Panc1 (cell line): ENCODE measurements at regions of chr15 and their contacts with region 1.

Region 1: GRCh38 chr15:69443032-69443611 is 9.5 kb upstream of the RPLP1 start:
- DNase-seq: no peak
- ATAC-seq: no peak
- H3K4me3 ChIP-seq: no peak overlapping the region
- H3K27ac ChIP-seq: no peak overlapping the region
- H3K4me1 ChIP-seq: no peaks in the 10 kb centered on the region
- H3K27me3 ChIP-seq: no peaks in the 10 kb centered on the region
- CTCF ChIP-seq: no peak

Region 2: GRCh38 chr15:69172828-69173227 is 270.3 kb before region 1 on chr15:
- CTCF ChIA-PET with region 1: no interaction called
- POLR2A ChIA-PET with region 1: no interaction called
- in situ Hi-C with region 1: no loop called
- intact Hi-C with region 1: no loop called
- DNase-seq: no peak
- ATAC-seq: no peak
- H3K4me3 ChIP-seq: no peak overlapping the region
- H3K27ac ChIP-seq: no peak overlapping the region
- H3K4me1 ChIP-seq: no peaks in the 10 kb centered on the region
- H3K27me3 ChIP-seq: no peaks in the 10 kb centered on the region
- CTCF ChIP-seq: no peak

Region 3: GRCh38 chr15:69290346-69291164 is 152.6 kb before region 1 on chr15:
- CTCF ChIA-PET with region 1: no interaction called
- POLR2A ChIA-PET with region 1: no interaction called
- in situ Hi-C with region 1: no loop called
- intact Hi-C with region 1: no loop called
- DNase-seq: no peak
- ATAC-seq: no peak
- H3K4me3 ChIP-seq: no peak overlapping the region
- H3K27ac ChIP-seq: no peak overlapping the region
- H3K4me1 ChIP-seq: no peaks in the 10 kb centered on the region
- H3K27me3 ChIP-seq: no peaks in the 10 kb centered on the region
- CTCF ChIP-seq: no peak

Region 4: DNA sequence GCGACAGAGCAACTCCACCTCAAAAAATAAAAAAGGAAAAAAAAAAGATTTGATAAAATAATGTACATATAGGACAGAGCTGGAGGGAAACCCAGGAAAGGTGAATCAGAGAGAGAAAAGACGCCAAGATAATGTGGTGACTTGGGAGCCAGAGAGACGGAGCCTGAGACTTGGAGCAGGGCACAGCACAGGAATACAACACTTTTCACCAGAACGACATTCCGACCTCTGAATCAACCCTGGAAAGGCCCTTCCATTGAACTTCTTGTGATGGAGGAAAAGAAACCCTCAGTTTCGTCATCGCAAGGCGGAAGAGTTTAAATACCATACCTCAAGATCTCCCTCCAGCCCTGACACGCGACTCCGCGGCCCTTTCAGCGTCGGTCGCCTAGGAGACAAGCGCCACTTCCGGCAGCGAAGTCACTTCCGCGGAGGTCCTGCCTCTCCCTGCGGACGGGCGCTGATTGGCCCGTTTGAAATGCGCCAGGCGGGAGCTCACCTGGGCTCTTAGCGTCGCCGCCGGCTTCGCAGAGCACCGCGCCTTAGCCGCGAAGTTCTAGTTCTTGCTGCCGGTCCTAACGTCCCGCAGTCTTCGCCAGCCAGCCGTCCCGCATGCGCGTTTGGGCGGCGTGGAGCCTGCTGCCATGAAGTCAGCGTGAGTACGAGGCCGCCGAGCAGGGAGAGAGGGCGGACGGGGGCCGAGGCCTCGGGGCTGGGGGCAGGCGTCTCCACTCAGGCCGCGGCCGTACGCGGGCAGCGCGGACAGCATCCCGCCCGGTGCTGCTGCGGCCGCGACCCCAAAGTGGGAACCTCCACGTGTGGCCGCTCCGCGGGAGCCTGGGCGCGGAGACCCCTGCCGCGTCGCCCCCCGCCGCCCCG is 29.1 kb before region 1 on chr15 and contains the start of gene KIF23:
- CTCF ChIA-PET with region 1: no interaction called
- POLR2A ChIA-PET with region 1: interaction called, 11 read pairs
- in situ Hi-C with region 1: no loop called
- intact Hi-C with region 1: no loop called
- DNase-seq: peak; percentile 75
- ATAC-seq: peak; percentile 98
- H3K4me3 ChIP-seq: peak within 1 kb of the TSS; percentile 65 to 84
- H3K27ac ChIP-seq: peak within 1 kb of the TSS; percentile 96
- H3K4me1 ChIP-seq: peaks cover 22% of the 10 kb centered on the region; the same call in 1 of the 2 replicates
- H3K27me3 ChIP-seq: no peaks in the 10 kb centered on the region
- CTCF ChIP-seq: no peak
- total RNA-seq, gene KIF23: 82.5 TPM

Region 5: GRCh38 chr15:69623392-69624152 is 180.4 kb after region 1 on chr15:
- CTCF ChIA-PET with region 1: no interaction called
- POLR2A ChIA-PET with region 1: no interaction called
- in situ Hi-C with region 1: no loop called
- intact Hi-C with region 1: no loop called
- DNase-seq: no peak
- ATAC-seq: no peak
- H3K4me3 ChIP-seq: no peak overlapping the region
- H3K27ac ChIP-seq: no peak overlapping the region
- H3K4me1 ChIP-seq: no peaks in the 10 kb centered on the region
- H3K27me3 ChIP-seq: no peaks in the 10 kb centered on the region; the same call in 1 of the 2 replicates
- CTCF ChIP-seq: no peak

Region 6: DNA sequence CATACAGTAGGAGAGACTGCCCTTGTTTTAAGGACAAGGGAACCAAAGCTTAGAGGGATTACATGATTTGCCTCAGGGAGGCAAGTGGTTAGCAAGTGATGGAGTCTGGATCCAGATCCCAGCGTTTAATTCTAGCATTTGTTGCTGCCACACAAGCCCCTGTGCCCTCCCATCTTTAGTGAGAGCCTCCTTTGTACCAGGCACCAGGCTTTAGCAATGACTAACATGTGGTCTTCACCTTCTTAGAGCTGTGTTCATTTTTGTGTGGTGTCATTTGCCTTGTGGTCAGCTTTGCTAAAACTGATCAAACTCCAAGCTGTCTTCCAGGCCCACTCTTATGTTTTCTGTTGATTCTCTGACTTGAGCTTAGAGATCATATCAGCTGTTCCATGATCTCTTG is 300.0 kb after region 1 on chr15:
- CTCF ChIA-PET with region 1: interaction called, 11 read pairs
- POLR2A ChIA-PET with region 1: no interaction called
- in situ Hi-C with region 1: no loop called
- intact Hi-C with region 1: no loop called
- DNase-seq: no peak
- ATAC-seq: no peak
- H3K4me3 ChIP-seq: no peak overlapping the region
- H3K27ac ChIP-seq: no peak overlapping the region
- H3K4me1 ChIP-seq: no peaks in the 10 kb centered on the region
- H3K27me3 ChIP-seq: no peaks in the 10 kb centered on the region
- CTCF ChIP-seq: no peak

Region 7: DNA sequence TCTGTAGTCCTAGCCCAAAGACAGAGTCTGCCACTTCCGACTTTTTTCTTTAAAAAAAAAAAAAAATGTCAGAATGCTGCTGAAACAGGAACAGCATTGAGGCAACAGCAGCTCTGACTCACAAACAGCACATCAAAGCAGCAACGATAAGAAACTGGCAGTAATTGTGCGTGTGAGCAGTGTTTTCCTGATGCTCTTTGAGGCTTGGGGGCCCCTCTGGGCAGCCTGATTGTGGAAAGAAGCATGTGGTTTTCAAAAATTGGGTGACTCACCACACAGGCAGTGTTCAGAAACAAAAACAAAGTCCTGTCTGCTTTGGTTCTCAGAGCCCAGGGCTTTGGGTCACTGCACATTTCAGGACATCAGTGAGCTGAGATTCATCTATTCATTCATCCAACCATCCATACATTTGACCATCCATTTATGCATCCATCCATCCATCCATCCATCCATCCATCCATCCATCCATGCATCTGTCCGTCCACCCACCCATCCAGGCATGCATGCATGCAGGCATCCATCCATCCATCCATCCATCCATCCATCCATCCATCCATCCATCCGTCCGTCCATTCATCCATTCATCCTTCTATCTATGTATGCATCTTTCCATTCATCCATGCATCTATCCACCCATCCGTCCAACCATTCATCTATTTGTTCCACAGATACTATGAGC is 317.9 kb after region 1 on chr15:
- CTCF ChIA-PET with region 1: no interaction called
- POLR2A ChIA-PET with region 1: no interaction called
- in situ Hi-C with region 1: no loop called
- intact Hi-C with region 1: no loop called
- DNase-seq: peak; percentile 17
- ATAC-seq: peak; percentile 93
- H3K4me3 ChIP-seq: no peak overlapping the region
- H3K27ac ChIP-seq: no peak overlapping the region
- H3K4me1 ChIP-seq: no peaks in the 10 kb centered on the region
- H3K27me3 ChIP-seq: no peaks in the 10 kb centered on the region
- CTCF ChIP-seq: no peak